ENCODE measurements at regions of chr10 and their contacts with region 1.

Region 1: DNA sequence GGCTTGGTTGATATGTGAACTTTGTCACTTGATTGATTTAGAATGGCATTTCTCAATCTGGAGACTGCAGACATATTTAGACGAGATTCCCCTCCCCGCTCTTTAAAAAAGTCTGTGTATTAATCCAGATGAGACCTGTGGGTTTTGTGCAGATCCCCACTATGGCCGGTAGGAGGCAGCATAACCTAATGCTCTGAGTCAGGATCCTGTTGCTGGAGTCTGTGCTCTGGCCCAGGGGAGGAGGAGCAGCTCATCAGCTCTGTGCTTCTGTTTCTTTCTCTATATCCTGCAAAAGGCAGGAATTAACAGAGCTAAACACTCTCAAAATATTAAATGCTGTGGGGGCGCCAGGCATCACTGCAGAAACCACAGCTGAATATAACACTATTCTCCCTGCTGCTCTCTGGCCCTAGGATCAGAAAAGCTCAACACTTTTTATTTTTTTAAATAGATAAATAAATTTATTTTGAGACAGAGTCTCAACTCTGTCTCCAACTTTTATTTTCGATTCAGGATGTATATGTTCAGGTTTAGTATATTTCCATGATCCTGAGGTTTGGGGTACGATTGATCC is 23.9 kb upstream of the SEPHS1 start:
- DNase-seq: peak; percentile 65
- ATAC-seq: peak; percentile 100
- H3K4me3 Mint-ChIP-seq: no peak overlapping the region
- H3K27ac Mint-ChIP-seq: no peak overlapping the region
- H3K4me1 Mint-ChIP-seq: peaks cover 10% of the 10 kb centered on the region; the same call in 1 of the 2 replicates
- H3K27me3 Mint-ChIP-seq: no peaks in the 10 kb centered on the region
- CTCF ChIP-seq: no peak; the same call in 1 of the 2 replicates

Region 2: DNA sequence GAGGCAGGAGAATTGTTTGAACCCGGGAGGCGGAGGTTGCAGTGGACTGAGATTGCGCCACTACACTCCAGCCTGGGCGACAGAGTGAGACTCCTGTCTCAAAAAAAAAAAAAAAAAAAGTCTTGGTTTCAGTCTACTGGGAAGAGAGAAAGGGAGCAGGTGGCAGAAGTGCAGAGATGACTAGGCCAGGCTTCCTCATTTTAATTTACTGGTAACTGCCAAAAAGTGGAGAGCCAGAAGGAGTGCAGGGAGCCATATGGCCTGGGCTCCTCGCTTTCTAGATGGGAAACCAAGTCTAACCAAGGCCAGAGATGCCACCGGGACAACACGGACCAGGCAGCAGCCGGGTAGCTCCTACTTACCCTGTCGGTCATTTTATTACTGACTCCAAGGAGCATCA is 36.1 kb before region 1 on chr10:
- CTCF ChIA-PET with region 1: no interaction called
- POLR2A ChIA-PET with region 1: no interaction called
- DNase-seq: no peak
- ATAC-seq: no peak
- H3K4me3 Mint-ChIP-seq: no peak overlapping the region
- H3K27ac Mint-ChIP-seq: peak overlapping the region; percentile 70
- H3K4me1 Mint-ChIP-seq: peaks cover 39% of the 10 kb centered on the region
- H3K27me3 Mint-ChIP-seq: no peaks in the 10 kb centered on the region
- CTCF ChIP-seq: no peak

Region 3: GRCh38 chr10:13382703-13383398 is 10.9 kb after region 1 on chr10:
- CTCF ChIA-PET with region 1: interaction called, 27 read pairs
- POLR2A ChIA-PET with region 1: no interaction called
- DNase-seq: no peak
- ATAC-seq: peak; percentile 45
- H3K4me3 Mint-ChIP-seq: peak overlapping the region; percentile 69
- H3K27ac Mint-ChIP-seq: 0 out of 2 replicates have a peak overlapping the region, but pooled peaks have one; percentile 5
- H3K4me1 Mint-ChIP-seq: peaks cover 16% of the 10 kb centered on the region
- H3K27me3 Mint-ChIP-seq: peaks cover 24% of the 10 kb centered on the region
- CTCF ChIP-seq: no peak

Region 4: GRCh38 chr10:13404305-13404759 is 32.3 kb after region 1 on chr10:
- CTCF ChIA-PET with region 1: interaction called, 17 read pairs
- POLR2A ChIA-PET with region 1: no interaction called
- DNase-seq: no peak
- ATAC-seq: no peak
- H3K4me3 Mint-ChIP-seq: no peak overlapping the region
- H3K27ac Mint-ChIP-seq: peak overlapping the region; percentile 90
- H3K4me1 Mint-ChIP-seq: peaks cover 35% of the 10 kb centered on the region
- H3K27me3 Mint-ChIP-seq: peaks cover 14% of the 10 kb centered on the region
- CTCF ChIP-seq: no peak

Region 5: DNA sequence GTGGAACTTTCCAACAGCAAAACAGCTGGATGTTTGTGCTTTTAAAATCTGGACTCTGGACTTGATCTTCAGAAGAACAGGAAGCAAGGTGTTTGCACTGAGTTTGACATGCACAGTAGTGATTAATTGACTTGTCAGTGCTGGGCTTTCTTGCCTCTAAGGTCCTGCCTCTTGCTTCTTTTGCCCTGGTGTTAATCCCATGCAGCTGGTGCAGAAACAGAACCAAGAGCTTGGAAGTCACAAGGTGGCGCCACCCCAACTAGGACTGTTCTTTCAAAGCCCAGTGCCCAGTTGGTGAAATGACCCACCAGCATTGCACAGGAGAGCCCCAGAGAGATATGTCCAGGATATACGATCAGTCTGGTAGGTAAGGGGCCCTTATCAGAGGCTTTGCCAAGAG is 42.9 kb after region 1 on chr10:
- CTCF ChIA-PET with region 1: interaction called, 11 read pairs
- POLR2A ChIA-PET with region 1: no interaction called
- DNase-seq: peak; percentile 62
- ATAC-seq: peak; percentile 92
- H3K4me3 Mint-ChIP-seq: no peak overlapping the region
- H3K27ac Mint-ChIP-seq: no peak overlapping the region
- H3K4me1 Mint-ChIP-seq: no peaks in the 10 kb centered on the region
- H3K27me3 Mint-ChIP-seq: peaks cover 7% of the 10 kb centered on the region
- CTCF ChIP-seq: no peak

Region 6: GRCh38 chr10:13483951-13484350 is 112.0 kb after region 1 on chr10:
- CTCF ChIA-PET with region 1: no interaction called
- POLR2A ChIA-PET with region 1: no interaction called
- DNase-seq: no peak
- ATAC-seq: no peak
- H3K4me3 Mint-ChIP-seq: no peak overlapping the region
- H3K27ac Mint-ChIP-seq: no peak overlapping the region
- H3K4me1 Mint-ChIP-seq: peaks cover 3% of the 10 kb centered on the region
- H3K27me3 Mint-ChIP-seq: no peaks in the 10 kb centered on the region
- CTCF ChIP-seq: no peak

Region 7: DNA sequence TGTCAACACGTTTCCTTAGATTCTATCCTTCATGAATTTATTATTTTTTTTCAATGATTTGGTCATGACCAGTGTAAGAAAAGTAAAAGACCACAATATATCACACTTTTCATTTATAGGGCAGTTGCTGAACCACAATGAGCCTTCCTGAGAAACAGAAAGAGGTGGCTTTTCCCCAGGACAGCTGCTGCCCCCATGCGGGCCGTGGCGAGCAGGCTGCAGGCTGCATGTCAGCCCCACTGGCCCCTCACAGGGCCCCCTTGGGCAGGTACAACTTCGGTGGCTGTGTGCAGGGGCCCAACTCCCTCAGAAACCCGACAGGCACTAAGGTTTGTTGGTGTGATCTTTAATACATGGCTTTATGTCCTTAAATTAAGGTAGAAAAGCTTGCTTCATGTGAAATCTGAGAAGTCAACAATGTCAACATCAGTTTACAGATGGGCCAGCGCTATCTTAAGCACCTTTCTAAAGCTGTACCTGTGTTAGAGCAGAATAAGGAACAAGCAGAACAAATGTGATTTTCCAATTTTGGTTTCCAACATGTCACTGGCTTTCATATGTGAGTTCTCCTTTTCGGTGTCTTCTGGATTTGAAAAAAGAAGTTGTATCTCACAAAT is 146.2 kb after region 1 on chr10:
- CTCF ChIA-PET with region 1: interaction called, 24 read pairs
- POLR2A ChIA-PET with region 1: no interaction called
- DNase-seq: peak; percentile 70
- ATAC-seq: peak; percentile 90
- H3K4me3 Mint-ChIP-seq: no peak overlapping the region
- H3K27ac Mint-ChIP-seq: no peak overlapping the region; the same call in 1 of the 2 replicates
- H3K4me1 Mint-ChIP-seq: peaks cover 13% of the 10 kb centered on the region
- H3K27me3 Mint-ChIP-seq: no peaks in the 10 kb centered on the region
- CTCF ChIP-seq: no peak

Region 8: GRCh38 chr10:13586676-13587355 is 214.8 kb after region 1 on chr10 and contains the start of gene PRPF18:
- CTCF ChIA-PET with region 1: interaction called, 11 read pairs
- POLR2A ChIA-PET with region 1: no interaction called
- DNase-seq: peak; percentile 94
- ATAC-seq: peak; percentile 97
- H3K4me3 Mint-ChIP-seq: peak within 1 kb of the TSS; percentile 100
- H3K27ac Mint-ChIP-seq: no peak within 1 kb of the TSS; the same call in 1 of the 2 replicates
- H3K4me1 Mint-ChIP-seq: peaks cover 14% of the 10 kb centered on the region
- H3K27me3 Mint-ChIP-seq: peaks cover 11% of the 10 kb centered on the region
- CTCF ChIP-seq: peak; percentile 71
- total RNA-seq, gene PRPF18: 11.5 to 13.4 TPM (median 11.8 TPM) in 3 replicates